ENCODE measurements at regions of chr18 and their contacts with region 1.

Region 1: GRCh38 chr18:3281456-3282400 is 19.8 kb downstream of the MYL12B start:
- DNase-seq: no peak
- H3K4me3 Mint-ChIP-seq: no peak overlapping the region
- H3K27ac Mint-ChIP-seq: no peak overlapping the region
- H3K4me1 Mint-ChIP-seq: no peaks in the 10 kb centered on the region
- H3K27me3 Mint-ChIP-seq: no peaks in the 10 kb centered on the region

Region 2: DNA sequence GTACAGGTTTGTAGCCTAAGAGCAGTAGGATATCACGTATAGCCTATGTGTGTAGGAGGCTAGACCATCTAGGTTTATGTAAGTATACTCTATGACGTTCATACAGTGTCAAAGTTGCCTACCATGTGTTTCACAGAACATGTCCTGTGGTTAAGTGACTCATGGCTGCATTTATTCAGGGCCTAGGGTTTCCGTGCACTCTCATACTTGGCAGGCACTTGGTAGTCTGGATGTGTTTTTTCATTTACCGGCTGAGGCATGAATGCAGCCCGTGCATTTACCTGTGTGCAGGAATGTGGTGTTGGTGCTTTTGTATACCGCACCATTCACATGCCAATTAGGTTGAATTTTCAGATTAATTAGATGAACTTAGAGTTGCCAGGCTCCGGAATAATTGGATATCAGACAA is 23.6 kb after region 1 on chr18:
- CTCF ChIA-PET with region 1: no interaction called
- POLR2A ChIA-PET with region 1: no interaction called
- DNase-seq: peak; percentile 69
- H3K4me3 Mint-ChIP-seq: peak overlapping the region; percentile 9
- H3K27ac Mint-ChIP-seq: peak overlapping the region; percentile 80
- H3K4me1 Mint-ChIP-seq: peaks cover 24% of the 10 kb centered on the region
- H3K27me3 Mint-ChIP-seq: peaks cover 21% of the 10 kb centered on the region

Region 3: DNA sequence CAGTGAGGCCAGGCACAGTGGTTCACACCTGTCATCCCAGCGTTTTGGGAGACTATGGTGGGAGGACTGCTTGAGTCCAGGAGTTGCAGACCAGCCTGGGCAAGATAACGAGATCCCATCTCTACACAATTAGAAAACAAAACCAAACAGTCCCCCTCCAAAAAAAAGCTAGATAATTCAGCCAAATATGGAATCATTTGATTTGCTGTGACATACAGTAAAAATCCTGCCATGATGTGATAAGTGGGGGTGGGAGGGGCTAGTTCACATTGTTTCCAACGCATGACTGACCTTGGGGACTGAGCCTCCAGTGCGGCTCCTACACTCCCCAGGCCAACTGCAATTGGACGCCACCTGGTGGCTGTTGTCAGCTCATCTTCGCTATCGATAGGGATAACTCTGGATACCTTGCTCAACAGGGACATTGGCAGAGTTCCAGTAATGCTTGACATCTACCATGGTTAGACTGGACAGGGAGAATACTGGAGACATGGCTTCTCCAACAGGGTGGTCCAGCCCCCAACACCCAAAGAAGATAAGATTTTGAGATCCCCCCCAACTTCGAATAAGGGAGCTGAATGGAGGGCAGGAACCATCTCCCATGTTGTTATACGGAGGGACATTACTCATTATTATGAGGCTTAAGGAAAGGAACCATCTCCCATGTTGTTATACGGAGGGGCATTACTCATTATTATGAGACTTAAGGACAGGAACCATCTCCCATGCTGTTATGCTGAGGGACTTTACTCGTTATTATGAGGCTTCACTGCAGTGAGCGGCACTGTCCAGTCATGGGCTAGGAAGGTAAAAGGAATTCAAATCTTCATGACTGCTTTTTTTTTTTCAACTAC is 304.2 kb after region 1 on chr18:
- CTCF ChIA-PET with region 1: interaction called, 14 read pairs
- POLR2A ChIA-PET with region 1: interaction called, 5 read pairs
- DNase-seq: peak; percentile 79
- H3K4me3 Mint-ChIP-seq: no peak overlapping the region
- H3K27ac Mint-ChIP-seq: no peak overlapping the region
- H3K4me1 Mint-ChIP-seq: peaks cover 37% of the 10 kb centered on the region
- H3K27me3 Mint-ChIP-seq: no peaks in the 10 kb centered on the region

Measured in activated CD4-positive, alpha-beta memory T cell treated with anti-CD3 and anti-CD28 coated beads, Interleukin-2, amount 10 ng/mL, durations not matched to agents 7 days and 5 days (primary cell).